GM18951 (cell line): ENCODE measurements at regions of chr7 and their contacts with region 1.

Region 1: DNA sequence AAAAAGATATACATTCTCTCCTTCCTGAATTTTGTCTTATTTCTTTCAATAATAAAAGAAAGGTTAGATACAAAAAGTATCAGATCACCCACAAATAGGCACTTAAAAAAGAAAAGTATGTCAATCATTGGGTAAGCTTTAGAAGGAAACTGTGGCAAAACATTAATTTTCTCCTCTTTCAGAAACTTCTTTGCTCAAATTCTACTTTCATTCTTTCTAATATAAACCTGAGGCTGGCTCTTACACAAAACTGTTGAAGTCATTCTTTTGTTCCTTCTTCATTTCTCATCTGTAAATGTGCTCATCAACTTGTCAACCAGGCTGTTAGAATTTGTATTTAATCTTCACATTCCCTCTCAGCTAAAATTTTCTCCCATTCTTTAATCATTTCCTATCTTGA is 124.6 kb downstream of the LRRN3 start:
- POLR2A ChIP-seq: no peak

Region 2: GRCh38 chr7:110347081-110347480 is 868.5 kb before region 1 on chr7:
- in situ Hi-C with region 1: no loop called
- POLR2A ChIP-seq: no peak

Region 3: DNA sequence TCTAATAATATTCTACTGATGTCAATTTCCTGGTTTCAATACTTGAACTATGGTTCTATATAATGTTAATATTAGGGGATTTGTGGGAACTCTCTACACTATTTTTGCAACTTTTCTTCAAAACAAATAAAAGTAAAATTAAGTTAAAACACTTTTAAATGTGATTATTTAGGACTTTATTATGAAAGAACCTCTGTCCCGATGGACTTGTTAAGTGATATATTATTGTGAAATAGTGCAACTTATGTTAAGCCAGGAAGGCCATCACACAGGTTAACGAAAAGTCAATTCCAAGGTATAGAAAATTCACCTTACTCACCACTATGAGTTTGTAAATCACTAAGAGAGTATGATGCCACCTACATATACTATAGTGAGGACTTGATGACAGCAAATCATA is 267.5 kb after region 1 on chr7:
- in situ Hi-C with region 1: loop called (anchors 5 kb)
- POLR2A ChIP-seq: no peak